ENCODE measurements at regions of chr16 and their contacts with region 1.

Region 1: DNA sequence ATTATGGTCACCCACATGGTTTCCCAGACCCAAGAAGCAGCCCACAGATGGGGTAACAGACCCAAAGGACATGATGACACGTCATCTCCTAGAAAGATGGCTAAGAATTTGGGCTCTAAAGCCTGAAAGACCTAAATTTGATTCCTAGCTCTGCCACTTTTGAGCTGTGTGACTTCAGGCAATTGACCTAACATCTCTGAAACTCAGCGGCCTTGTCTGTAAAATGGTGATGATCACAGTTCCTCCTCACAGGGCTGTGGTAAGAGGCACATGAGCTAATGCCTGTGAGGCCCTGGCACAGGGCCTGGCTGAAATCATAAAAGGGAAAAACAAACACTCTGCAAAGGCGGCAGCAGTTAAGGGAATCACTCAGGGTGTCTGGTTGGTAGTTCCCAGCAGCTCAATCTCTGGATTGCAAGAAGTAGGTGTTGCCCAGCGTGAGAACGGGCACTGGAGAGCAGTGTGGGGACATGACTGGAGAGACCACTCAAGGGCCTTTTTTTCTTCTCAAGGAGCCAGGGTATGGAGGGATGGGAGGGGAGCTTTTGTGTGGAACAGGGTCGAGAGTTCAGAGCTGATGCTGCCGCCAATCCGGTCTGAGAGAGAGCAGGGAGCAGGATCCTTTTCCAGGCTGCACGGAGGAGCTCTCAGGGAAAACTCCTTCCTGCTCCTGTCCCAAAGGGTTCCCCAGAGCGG is 15.0 kb downstream of the SCNN1B start:
- DNase-seq: peak; percentile 65
- H3K4me3 ChIP-seq: no peak overlapping the region
- H3K27ac ChIP-seq: peak overlapping the region in 2 of 3 donors; percentile 27 to 52
- H3K4me1 ChIP-seq: peaks cover 14 to 44% of the 10 kb centered on the region in 2 donors
- H3K27me3 ChIP-seq: no peaks in the 10 kb centered on the region
- CTCF ChIP-seq: no peak
- POLR2A ChIP-seq: no peak

Region 2: DNA sequence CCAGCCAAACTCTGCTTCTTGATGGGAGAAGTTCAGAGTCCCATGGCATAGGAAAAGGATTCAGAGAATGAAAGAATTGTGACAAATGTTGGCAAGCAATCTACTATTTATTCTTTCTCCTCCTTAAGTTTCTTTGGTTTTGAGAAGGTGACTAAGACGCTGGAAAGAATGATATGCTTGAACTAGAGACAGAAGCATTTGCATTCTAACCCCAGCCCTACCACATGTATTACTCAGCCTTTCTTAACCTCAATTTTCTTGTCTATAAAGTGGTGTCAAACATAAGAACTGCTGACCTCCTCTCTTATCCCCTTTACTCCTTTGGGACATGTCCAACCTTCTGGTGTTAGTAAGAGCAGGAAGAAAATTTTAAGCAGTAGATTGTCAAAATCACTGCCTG is 378.5 kb before region 1 on chr16:
- intact Hi-C with region 1: no loop called
- DNase-seq: no peak
- H3K4me3 ChIP-seq: no peak overlapping the region
- H3K27ac ChIP-seq: no peak overlapping the region
- H3K4me1 ChIP-seq: no peaks in the 10 kb centered on the region
- H3K27me3 ChIP-seq: no peaks in the 10 kb centered on the region
- CTCF ChIP-seq: no peak
- POLR2A ChIP-seq: no peak

Region 3: DNA sequence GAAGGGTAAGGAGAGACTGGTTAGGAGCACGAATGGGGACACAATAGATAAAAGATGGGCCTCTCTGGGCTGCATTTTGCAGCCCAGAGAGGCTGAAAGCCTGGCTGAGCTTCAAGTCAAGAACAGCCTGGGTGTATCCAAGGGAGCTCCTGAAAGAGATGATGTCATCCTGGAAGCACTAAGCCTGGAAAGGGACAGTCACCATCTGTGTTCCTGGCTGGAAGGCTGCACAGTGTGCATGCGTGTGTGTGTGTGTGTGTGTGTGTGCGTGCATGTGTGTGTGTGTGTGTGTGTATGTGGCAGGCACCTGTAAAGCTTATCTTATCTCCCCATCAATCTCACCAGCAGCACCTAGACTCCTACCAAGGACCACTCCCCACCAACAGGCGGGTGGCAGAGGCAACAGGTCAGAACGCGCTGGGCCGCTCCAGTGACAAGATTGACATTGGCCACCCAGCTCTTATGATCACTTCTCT is 91.7 kb after region 1 on chr16:
- intact Hi-C with region 1: no loop called
- DNase-seq: peak; percentile 20 to 51
- H3K4me3 ChIP-seq: no peak overlapping the region
- H3K27ac ChIP-seq: peak overlapping the region in 2 of 3 donors; percentile 62 to 67
- H3K4me1 ChIP-seq: peaks cover 41 to 47% of the 10 kb centered on the region in 2 donors
- H3K27me3 ChIP-seq: no peaks in the 10 kb centered on the region
- CTCF ChIP-seq: no peak
- POLR2A ChIP-seq: no peak

Region 4: DNA sequence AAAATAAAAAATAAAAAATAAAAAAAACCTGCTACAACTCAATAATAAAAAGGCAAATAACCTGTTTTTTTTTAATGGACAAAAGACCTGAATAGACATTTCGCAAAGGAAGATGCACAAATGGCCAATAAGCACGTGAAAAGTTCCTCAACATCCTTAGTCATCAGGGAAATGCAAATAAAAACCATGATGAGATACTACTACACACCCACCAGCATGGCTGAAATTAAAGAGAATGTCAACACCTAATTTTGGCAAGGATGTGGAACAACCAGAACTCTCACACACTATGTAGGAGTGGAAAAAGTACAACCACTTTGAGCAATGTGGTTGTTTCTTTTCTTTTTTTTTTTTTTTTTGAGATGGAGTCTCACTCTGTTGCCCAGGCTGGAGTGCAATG is 111.2 kb after region 1 on chr16:
- intact Hi-C with region 1: loop called (anchors 5 kb)
- DNase-seq: no peak
- H3K4me3 ChIP-seq: no peak overlapping the region
- H3K27ac ChIP-seq: no peak overlapping the region
- H3K4me1 ChIP-seq: peaks cover 21 to 24% of the 10 kb centered on the region in 2 donors
- H3K27me3 ChIP-seq: no peaks in the 10 kb centered on the region
- CTCF ChIP-seq: no peak
- POLR2A ChIP-seq: no peak